GM13976 (cell line): ENCODE measurements at regions of chr15 and their contacts with region 1.

Region 1: GRCh38 chr15:74620636-74621545 is 5.3 kb downstream of the CLK3 start:
- DNase-seq: peak; percentile 87
- CTCF ChIP-seq: peak; percentile 89

Region 2: DNA sequence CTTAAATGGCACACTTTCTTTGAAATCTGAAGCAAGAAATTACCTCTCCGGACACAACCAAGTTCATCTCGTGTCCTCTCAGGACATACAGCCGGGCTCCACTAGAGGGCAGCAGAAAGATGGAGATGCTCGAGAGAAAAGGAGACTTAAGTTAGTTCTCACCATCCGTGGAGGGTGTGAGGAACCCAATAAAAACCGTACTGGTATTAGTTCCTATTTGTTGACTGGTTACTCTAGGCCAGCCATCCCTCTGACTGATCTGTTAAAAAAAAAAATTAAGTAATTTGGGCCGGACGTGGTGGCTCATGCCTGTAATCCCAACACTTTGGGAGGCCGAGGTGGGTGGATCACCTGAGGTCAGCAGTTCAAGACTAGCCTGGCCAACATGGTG is 245.6 kb before region 1 on chr15:
- in situ Hi-C with region 1: loop called (anchors 5 kb)
- DNase-seq: peak; percentile 84
- CTCF ChIP-seq: peak; percentile 82

Region 3: GRCh38 chr15:74422650-74423430 is 198.1 kb before region 1 on chr15:
- in situ Hi-C with region 1: no loop called
- DNase-seq: no peak
- CTCF ChIP-seq: no peak